Mucosa of descending colon (tissue), 3 donors: ENCODE measurements at regions of chr19 and their contacts with region 1.

Region 1: DNA sequence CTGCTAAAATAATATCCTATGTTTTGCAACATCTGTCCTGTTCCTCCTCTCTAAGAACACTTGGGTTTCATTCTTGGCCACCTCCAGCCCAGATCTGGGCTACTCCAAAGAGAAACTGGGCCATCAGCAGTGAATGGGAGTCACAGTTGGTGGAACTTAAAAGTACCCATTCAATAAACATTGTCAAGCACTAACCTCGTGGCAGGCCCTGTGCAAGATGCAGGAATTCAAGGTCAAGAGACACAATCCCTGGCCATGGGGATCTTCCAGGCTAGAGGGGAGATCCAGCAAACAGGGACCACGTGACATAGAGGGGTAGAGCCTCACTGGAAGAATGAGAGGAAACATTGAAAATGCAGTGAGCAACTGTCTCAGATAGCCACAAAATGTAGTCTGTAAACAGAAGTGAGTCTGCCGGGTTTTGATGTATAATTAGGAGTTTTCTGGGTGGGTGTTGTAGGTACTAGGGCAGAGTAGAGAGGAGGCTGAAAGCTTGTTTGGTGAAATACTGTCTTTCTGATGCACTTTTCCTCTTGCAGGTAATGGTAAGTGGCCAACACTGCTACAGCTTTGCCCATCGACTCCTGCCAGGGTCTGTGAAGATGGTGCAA is 14.8 kb upstream of the EID2 start:
- DNase-seq: no peak
- ATAC-seq: no peak
- H3K4me3 ChIP-seq: no peak overlapping the region
- H3K4me1 ChIP-seq: peaks cover 3% of the 10 kb centered on the region
- CTCF ChIP-seq: no peak

Region 2: DNA sequence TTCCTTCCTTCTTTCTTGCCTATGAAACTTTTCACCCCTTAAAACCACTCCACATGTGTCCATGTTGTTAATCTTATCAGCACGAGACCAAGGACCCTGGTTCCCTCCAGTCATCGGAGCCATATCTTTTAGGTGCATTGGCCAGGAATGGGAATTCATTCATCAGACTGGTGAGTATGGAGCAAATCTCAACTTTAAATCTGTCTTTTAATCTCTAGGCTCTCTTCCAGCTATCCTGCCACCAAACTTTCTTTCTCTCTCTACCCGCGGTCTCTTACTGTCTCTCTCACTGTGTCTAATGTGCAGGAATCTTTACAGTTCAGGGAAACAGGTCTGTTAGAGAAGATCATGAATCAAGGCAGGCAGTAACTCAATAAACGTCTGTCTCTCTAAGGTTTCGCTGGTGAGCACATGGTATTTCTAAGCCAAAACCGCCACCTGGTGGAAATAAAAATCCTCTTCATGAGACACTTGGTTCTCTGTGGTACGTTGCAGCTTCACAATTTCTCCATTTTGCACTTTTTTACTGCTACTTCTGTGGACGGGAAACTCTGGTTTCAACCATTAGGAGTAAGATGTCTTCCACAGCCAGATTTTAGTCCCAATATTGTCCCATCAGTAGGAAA is 117.0 kb after region 1 on chr19:
- intact Hi-C with region 1: loop called in 1 of 2 experiments (anchors 5 kb)
- DNase-seq: peak in 1 of 3 donors; percentile 61
- ATAC-seq: peak; percentile 60
- H3K4me3 ChIP-seq: no peak overlapping the region
- H3K4me1 ChIP-seq: no peaks in the 10 kb centered on the region
- CTCF ChIP-seq: no peak

Region 3: DNA sequence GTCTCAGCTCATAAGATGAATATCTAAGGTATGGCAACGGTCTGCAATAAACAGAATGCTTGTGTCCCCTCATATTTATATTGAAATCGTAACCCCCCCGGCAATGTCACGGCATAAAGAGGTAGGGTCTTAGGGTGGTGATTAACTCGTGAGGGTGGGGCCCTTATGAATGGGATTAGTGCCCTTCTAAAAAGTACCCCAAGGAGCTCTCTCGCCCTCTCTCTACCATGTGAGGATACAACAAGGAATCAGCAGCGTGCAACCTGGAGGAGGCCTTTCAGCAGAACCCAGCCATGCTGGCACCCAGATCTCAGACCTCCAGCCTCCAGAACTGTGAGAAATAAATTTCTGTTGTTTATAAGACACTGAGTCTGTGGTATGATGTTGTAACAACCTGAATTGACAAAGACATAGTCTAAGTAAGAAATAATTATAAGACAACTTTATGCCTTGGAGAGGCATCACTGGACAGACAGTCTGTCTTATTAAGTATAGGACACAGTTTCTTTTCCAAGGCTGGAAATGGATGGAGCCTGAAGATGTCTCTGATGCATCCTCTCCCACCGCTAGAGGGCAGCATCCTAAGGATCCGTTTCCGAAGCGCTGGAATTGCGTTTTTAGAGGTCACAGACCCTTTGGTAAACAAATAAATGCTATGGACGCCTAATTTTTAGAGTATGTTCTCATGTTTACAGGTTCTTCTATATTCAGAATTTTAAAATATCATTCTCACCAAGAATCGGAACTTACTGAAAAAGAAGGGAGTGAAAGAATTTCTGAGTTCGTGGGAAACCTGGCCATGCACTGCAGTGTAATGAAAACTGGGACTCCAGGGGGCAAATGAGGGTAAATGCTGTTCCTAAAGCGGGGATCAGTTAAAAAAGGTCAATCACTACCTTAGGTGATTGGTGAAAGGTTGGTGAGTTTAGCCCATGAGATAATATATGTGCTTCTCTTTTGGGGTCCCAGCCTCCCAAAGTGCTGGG is 210.6 kb after region 1 on chr19:
- intact Hi-C with region 1: loop called in 1 of 2 experiments (anchors 5 kb)
- DNase-seq: peak in 1 of 3 donors; percentile 74
- ATAC-seq: peak; percentile 53
- H3K4me3 ChIP-seq: no peak overlapping the region
- H3K4me1 ChIP-seq: no peaks in the 10 kb centered on the region
- CTCF ChIP-seq: peak; percentile 67

Region 4: GRCh38 chr19:39871886-39872866 is 317.4 kb after region 1 on chr19:
- intact Hi-C with region 1: no loop called
- DNase-seq: no peak
- ATAC-seq: no peak
- H3K4me3 ChIP-seq: no peak overlapping the region
- H3K4me1 ChIP-seq: no peaks in the 10 kb centered on the region
- CTCF ChIP-seq: no peak